SK-N-SH (cell line): ENCODE measurements at regions of chr7 and their contacts with region 1.

Region 1: DNA sequence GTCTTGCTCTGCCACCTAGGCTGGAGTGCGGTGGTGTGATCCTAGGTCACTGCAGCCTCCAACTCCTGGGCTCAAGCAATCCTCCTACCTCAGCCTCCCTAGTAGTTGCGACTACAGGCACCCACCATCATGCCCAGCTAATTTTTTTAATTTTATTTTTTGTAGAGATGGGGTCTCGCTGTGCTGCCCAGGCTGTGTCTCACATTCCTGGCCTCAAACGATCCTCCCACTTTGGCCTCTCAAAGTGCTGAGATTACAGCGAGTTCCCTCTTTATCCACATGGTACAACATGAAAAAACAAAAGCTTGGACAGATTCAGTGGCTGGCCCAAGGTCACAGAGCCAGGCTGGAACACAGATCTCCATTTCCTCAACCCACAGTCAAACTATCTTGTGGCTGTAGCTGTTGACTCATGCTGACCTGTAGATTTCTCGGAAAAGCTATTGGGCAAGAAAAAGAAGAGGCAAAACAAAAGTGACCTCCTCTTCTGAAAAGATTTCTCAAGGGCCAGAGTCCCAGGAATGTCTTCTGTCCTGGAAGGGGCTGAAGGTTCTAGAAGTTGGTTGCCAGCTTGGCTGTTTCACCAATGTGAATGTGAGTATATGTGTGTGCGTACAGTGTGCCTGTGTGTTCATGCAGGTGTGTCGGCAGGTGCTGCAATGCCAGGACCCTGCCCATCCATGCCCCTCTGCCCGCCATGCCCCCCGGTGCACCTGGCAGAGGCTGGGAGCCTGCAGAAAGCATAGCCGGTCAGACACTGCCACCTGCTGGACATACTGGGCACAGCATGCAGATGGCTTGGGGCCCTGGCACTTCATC is 28.4 kb downstream of the TMEM130 start:
- DNase-seq: peak; percentile 88
- H3K4me3 ChIP-seq: peak overlapping the region in 1 of 2 experiments; percentile 6; a peak in 1 of 4 replicates
- H3K27ac ChIP-seq: no peak overlapping the region
- H3K4me1 ChIP-seq: no peaks in the 10 kb centered on the region; a peak in 1 of 4 replicates
- H3K27me3 ChIP-seq: no peaks in the 10 kb centered on the region
- CTCF ChIP-seq: peak; percentile 100
- EP300 ChIP-seq: no peak
- RAD21 ChIP-seq: peak; percentile 99

Region 2: DNA sequence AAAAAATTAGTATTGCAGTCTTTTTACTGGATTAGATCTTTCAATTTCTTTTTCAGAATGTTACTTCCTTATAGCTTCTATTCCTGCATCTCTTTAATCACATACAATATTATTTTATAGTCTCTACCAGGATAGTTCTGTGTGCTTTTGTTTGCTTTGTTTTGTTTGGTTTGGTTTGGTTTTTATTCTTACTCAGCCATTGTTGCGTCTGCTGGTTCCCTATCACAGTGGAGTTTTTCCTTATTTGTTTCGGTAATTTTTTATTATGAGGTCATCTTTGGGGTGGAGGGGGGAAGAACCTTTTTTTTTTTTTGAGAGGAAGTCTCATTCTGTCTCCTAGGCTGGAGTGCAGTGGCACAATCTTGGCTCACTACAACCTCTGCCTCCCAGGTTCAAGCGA is 431.5 kb before region 1 on chr7:
- CTCF ChIA-PET with region 1: interaction called, 13 read pairs
- POLR2A ChIA-PET with region 1: no interaction called
- DNase-seq: no peak
- H3K4me3 ChIP-seq: no peak overlapping the region
- H3K27ac ChIP-seq: no peak overlapping the region
- H3K4me1 ChIP-seq: no peaks in the 10 kb centered on the region
- H3K27me3 ChIP-seq: no peaks in the 10 kb centered on the region
- CTCF ChIP-seq: no peak
- EP300 ChIP-seq: no peak
- RAD21 ChIP-seq: no peak

Region 3: GRCh38 chr7:98650424-98650823 is 191.0 kb before region 1 on chr7:
- CTCF ChIA-PET with region 1: interaction called, 10 read pairs
- POLR2A ChIA-PET with region 1: no interaction called
- DNase-seq: no peak
- H3K4me3 ChIP-seq: no peak overlapping the region
- H3K27ac ChIP-seq: no peak overlapping the region
- H3K4me1 ChIP-seq: no peaks in the 10 kb centered on the region
- H3K27me3 ChIP-seq: no peaks in the 10 kb centered on the region
- CTCF ChIP-seq: no peak
- EP300 ChIP-seq: no peak
- RAD21 ChIP-seq: no peak

Region 4: DNA sequence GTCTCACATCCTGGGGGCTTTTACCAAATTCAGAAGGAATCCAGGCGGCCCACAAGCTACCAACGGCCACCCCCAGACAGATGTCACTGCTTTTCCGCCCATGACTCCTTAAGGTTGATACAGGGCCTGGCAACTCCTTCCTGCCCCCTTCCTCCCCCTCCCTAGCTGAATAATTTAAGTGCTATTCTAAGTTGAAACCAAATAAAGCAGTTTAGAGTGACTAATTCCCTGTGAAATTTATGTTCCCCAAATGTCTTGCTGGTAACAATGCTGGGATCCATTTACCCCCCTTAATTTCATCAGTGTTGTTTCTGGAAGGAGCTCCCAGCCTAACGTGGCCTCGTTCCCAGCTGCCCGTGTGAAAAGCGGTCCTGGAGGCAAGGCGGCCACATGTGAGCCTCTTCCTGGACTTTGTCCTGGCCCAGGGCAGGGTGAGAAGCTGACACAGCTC is 81.2 kb before region 1 on chr7:
- CTCF ChIA-PET with region 1: interaction called, 249 read pairs
- POLR2A ChIA-PET with region 1: no interaction called
- DNase-seq: no peak
- H3K4me3 ChIP-seq: no peak overlapping the region
- H3K27ac ChIP-seq: no peak overlapping the region
- H3K4me1 ChIP-seq: no peaks in the 10 kb centered on the region; a peak in 1 of 4 replicates
- H3K27me3 ChIP-seq: no peaks in the 10 kb centered on the region
- CTCF ChIP-seq: no peak
- EP300 ChIP-seq: no peak
- RAD21 ChIP-seq: no peak

Region 5: GRCh38 chr7:98816241-98816640 is 25.1 kb before region 1 on chr7:
- CTCF ChIA-PET with region 1: interaction called, 12 read pairs
- POLR2A ChIA-PET with region 1: no interaction called
- DNase-seq: no peak
- H3K4me3 ChIP-seq: no peak overlapping the region
- H3K27ac ChIP-seq: no peak overlapping the region
- H3K4me1 ChIP-seq: no peaks in the 10 kb centered on the region
- H3K27me3 ChIP-seq: no peaks in the 10 kb centered on the region
- CTCF ChIP-seq: no peak
- EP300 ChIP-seq: no peak
- RAD21 ChIP-seq: no peak

Region 6: DNA sequence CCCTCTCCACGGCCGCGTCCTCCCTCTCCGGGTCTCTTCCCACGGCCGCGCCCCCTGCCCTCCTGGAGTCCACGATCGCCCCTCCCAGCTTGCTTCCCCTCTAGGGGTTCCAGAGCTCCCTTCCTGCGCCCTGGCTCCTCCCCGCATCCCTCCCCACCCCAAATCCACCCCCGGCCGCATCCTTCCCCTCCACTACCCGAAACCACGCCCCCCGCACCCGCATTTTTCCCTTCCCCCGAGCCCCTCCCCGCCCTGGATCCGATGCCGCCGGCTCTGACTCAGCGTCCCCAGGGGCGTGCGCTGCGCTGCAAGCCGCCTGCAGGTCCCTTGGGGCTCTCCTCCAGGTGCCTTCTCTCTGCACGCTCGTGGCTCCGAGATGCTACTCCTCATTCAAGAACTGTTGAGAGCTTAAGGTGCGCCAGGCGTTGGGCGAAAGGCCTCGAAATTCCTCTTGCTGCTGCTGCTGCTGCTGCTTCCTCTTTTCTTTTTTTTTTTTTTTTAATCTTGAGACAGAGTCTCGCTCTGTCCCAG is 28.8 kb after region 1 on chr7:
- CTCF ChIA-PET with region 1: interaction called, 23 read pairs
- POLR2A ChIA-PET with region 1: no interaction called
- DNase-seq: peak; percentile 86
- H3K4me3 ChIP-seq: peak overlapping the region; percentile 52 to 55
- H3K27ac ChIP-seq: peak overlapping the region in 1 of 2 experiments; percentile 71; a peak in 1 of 4 replicates
- H3K4me1 ChIP-seq: peaks cover 0 to 30% of the 10 kb centered on the region in 2 experiments; a peak in 1 of 4 replicates
- H3K27me3 ChIP-seq: peaks cover 21% of the 10 kb centered on the region
- CTCF ChIP-seq: no peak
- EP300 ChIP-seq: no peak
- RAD21 ChIP-seq: no peak

Region 7: DNA sequence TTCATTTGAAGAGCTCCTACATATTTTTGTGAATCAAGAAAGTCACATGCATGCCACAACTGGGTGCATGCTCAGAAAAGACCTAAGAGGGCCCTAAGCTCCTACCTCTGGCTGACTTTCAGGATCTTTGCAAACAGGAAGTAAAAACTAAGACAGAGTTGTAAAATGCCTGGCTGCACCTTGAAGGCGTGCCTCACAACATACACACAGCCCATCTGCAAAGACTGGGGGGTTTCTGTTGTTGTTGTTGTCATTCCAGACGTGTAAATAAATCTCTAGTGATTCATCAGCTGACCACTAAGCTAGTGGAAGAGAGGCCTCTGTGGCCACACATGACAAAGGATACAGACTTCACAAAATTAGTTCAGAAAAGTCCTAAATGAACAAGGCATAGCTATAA is 270.7 kb after region 1 on chr7:
- CTCF ChIA-PET with region 1: no interaction called
- POLR2A ChIA-PET with region 1: no interaction called
- DNase-seq: no peak
- H3K4me3 ChIP-seq: no peak overlapping the region
- H3K27ac ChIP-seq: no peak overlapping the region
- H3K4me1 ChIP-seq: peaks cover 10 to 14% of the 10 kb centered on the region in 2 experiments
- H3K27me3 ChIP-seq: no peaks in the 10 kb centered on the region
- CTCF ChIP-seq: no peak
- EP300 ChIP-seq: no peak
- RAD21 ChIP-seq: no peak